GM12878 (cell line): ENCODE measurements at regions of chr19 and their contacts with region 1.

Region 1: DNA sequence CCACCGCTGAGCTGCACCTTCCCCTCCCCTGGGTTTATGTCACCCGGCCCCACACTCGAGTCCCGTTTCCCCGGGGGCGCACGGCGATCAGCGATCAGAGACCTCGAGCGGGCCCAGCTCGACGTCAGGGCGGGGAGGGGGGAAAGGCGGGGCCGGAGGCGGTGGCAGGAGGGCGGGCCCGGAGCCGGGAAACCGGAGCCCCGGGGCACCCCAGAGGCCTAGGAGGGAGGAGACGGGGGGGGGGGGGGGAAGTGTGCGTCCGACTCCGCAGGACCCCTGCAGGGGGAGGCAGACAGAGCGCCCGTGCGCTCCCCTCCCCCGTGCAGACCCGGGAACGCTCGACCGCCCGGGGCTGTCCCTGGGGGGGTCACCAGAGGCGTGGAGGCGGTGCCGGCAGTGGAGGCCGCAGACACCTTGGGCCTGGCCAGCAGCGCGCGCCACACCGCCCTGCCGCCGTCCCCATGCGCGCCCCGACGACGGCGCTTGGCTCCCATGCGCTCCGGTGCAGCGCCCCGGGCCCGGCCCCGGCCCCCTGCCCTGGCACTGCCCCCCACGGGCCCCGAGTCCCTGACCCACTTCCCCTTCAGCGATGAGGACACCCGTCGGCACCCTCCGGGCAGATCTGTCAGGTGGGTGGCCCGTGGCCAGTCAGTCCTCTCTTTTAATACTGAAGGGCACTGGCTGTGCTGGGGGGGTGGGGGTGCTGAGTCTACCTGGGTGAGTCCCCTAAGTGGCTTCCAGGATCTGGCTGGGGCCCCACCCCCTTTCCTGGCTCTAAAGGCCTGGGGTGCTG is 11.8 kb downstream of the PDE4A start:
- DNase-seq: no peak
- ATAC-seq: peak; percentile 66
- H3K4me3 ChIP-seq: peak overlapping the region; percentile 54; the same call in 1 of the 2 replicates
- H3K27ac ChIP-seq: peak overlapping the region; percentile 56; the same call in 1 of the 2 replicates
- H3K4me1 ChIP-seq: peaks cover 41% of the 10 kb centered on the region
- H3K27me3 ChIP-seq: peaks cover 0 to 4% of the 10 kb centered on the region in 2 experiments; a peak in 1 of 4 replicates
- CTCF ChIP-seq: no peak
- EP300 ChIP-seq: no peak
- POLR2A ChIP-seq: no peak
- RAD21 ChIP-seq: no peak

Region 2: GRCh38 chr19:10332955-10333757 is 99.0 kb before region 1 on chr19 and contains the start of gene RAVER1:
- CTCF ChIA-PET with region 1: no interaction called
- POLR2A ChIA-PET with region 1: no interaction called
- RAD21 ChIA-PET with region 1: no interaction called
- SMC1A ChIA-PET with region 1: no interaction called
- in situ Hi-C with region 1: no loop called
- intact Hi-C with region 1: no loop called
- DNase-seq: peak; percentile 87
- ATAC-seq: peak; percentile 98
- H3K4me3 ChIP-seq: peak within 1 kb of the TSS; percentile 100
- H3K27ac ChIP-seq: peak within 1 kb of the TSS; percentile 92
- H3K4me1 ChIP-seq: peaks cover 16% of the 10 kb centered on the region
- H3K27me3 ChIP-seq: no peaks in the 10 kb centered on the region
- CTCF ChIP-seq: no peak
- EP300 ChIP-seq: peak; percentile 10 to 28; a peak in 1 of 4 replicates
- POLR2A ChIP-seq: peak; percentile 96
- RAD21 ChIP-seq: no peak
- polyA plus RNA-seq, gene RAVER1: 0.03 to 0.05 TPM

Region 3: DNA sequence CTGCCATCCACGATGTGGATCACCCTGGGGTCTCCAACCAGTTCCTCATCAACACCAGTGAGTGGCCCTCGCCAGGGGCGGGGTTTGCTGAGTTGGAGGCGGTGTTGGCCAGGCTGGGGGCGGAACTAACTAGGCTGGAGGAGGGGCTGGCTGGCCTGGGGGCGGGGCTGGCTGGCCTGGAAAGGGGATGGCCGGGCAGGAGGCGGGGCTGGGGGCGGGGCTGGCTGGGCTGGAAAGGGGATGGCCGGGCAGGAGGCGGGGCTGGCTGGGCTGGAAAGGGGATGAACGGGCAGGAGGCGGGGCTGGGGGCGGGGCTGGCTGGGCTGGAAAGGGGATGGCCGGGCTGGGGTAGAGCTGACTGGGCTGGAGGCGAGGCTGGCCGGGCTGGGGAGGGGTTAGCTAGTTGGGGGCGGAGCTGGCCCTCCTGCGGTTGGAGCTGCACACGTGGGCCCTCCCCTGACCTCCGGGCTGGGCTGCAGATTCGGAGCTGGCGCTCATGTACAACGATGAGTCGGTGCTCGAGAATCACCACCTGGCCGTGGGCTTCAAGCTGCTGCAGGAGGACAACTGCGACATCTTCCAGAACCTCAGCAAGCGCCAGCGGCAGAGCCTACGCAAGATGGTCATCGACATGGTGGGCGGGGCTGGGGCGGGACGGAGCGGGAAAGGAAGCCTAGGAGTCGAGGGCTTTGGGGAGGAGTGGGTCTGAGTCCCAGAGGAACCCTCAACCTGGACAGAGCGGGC is 29.1 kb after region 1 on chr19:
- CTCF ChIA-PET with region 1: interaction called, 11 read pairs
- POLR2A ChIA-PET with region 1: no interaction called
- RAD21 ChIA-PET with region 1: interaction called, 7 read pairs
- SMC1A ChIA-PET with region 1: interaction called, 3 read pairs
- in situ Hi-C with region 1: no loop called
- intact Hi-C with region 1: no loop called
- DNase-seq: peak; percentile 60
- ATAC-seq: peak; percentile 100
- H3K4me3 ChIP-seq: peak overlapping the region; percentile 70; the same call in 1 of the 2 replicates
- H3K27ac ChIP-seq: no peak overlapping the region
- H3K4me1 ChIP-seq: peaks cover 4% of the 10 kb centered on the region; the same call in 1 of the 2 replicates
- H3K27me3 ChIP-seq: no peaks in the 10 kb centered on the region
- CTCF ChIP-seq: no peak
- EP300 ChIP-seq: no peak
- POLR2A ChIP-seq: no peak
- RAD21 ChIP-seq: no peak